ENCODE measurements at regions of chr1 and their contacts with region 1.

Region 1: DNA sequence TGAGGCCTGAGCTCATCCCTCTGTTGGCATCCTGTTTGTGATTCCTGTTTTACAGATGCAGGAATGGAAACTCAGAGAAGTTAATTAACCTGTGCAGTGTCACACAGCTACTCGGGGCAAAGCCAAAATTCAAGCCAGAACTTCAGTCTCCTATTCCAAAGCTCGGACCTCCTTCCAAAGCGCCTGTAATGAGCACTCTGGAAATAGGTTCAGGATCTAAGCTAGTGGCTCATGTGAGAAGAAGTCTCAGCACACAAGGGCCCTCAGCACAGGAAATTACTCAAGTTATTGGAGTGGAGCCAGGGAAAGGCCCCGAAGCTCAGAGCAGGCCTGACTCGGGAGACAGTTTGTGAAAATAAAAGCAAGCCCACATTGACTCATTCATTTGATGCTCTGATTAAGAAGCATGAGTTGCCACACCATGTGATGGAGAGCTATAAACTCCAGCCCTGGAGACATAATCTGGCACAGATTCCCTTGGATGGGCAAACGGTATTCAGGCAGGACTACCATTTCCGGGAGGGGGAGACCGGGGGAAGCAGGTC is 50.6 kb upstream of the LYST start:
- DNase-seq: peak; percentile 84 to 92
- ATAC-seq: peak; percentile 83 to 90
- H3K4me3 ChIP-seq: no peak overlapping the region
- H3K27ac ChIP-seq: peak overlapping the region; percentile 78 to 87
- H3K4me1 ChIP-seq: peaks cover 58% of the 10 kb centered on the region
- CTCF ChIP-seq: no peak
- EP300 ChIP-seq: peak; percentile 81 to 82; a peak in 2 of 5 replicates
- POLR2A ChIP-seq: no peak
- RAD21 ChIP-seq: peak; percentile 28 to 46; a peak in 3 of 5 replicates

Region 2: GRCh38 chr1:235902638-235903542 is 14.4 kb before region 1 on chr1:
- CTCF ChIA-PET with region 1: interaction called, 5 read pairs
- POLR2A ChIA-PET with region 1: interaction called, 13 read pairs
- DNase-seq: peak; percentile 55 to 89
- ATAC-seq: peak; percentile 90 to 93
- H3K4me3 ChIP-seq: no peak overlapping the region
- H3K27ac ChIP-seq: peak overlapping the region; percentile 70 to 84
- H3K4me1 ChIP-seq: peaks cover 34% of the 10 kb centered on the region
- CTCF ChIP-seq: no peak
- EP300 ChIP-seq: peak; percentile 41 to 48; a peak in 2 of 5 replicates
- POLR2A ChIP-seq: no peak
- RAD21 ChIP-seq: no peak; a peak in 1 of 5 replicates

Measured in A549 (cell line).